ENCODE measurements at regions of chr5 and their contacts with region 1.

Region 1: GRCh38 chr5:176388444-176389134 is at the starts of genes HIGD2A and NOP16:
- DNase-seq: peak; percentile 92
- ATAC-seq: peak; percentile 90
- H3K4me3 Mint-ChIP-seq: peak within 1 kb of the TSS; percentile 100
- H3K27ac Mint-ChIP-seq: peak within 1 kb of the TSS; percentile 100
- H3K4me1 Mint-ChIP-seq: peaks cover 30% of the 10 kb centered on the region
- H3K27me3 Mint-ChIP-seq: no peaks in the 10 kb centered on the region
- CTCF ChIP-seq: no peak
- total RNA-seq, gene HIGD2A: 113 and 116 TPM in 2 replicates
- total RNA-seq, gene NOP16: 50.9 and 65.1 TPM in 2 replicates

Region 2: DNA sequence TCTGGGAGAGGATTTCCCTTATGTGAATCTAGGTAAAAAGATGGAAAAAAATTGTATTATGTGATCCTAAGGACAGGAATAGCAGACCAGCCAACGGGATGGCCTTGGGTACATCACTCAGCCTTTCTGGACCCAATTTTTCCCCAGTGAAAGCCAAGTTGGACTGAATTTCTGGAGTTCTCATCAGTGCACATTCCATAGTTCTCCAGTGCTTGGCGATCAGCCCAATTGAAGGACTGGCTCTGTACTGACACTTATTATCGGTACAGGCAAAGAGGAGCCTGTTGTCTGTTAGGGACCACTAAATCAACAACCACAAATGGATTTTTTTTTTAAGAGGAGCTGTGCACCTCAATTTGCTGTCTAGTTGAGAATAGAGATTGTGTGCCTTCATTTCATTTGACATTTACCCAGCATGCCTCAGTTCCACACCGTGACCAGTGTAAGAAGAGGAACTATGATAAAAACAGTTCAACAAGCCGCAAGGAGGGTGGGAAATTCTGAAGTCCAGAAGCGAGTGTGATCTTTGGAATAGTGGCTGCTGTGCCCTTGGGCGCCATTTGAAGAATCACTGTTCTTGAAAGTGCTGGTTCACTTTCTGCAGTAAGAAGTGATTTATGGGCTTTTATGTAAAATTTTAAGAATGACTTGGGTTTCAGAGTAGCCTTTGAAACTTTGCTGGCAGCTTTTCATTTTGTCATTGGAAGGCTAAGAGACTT is 15.3 kb before region 1 on chr5:
- CTCF ChIA-PET with region 1: no interaction called
- POLR2A ChIA-PET with region 1: interaction called, 3 read pairs
- intact Hi-C with region 1: loop called (anchors 1 kb)
- DNase-seq: no peak
- ATAC-seq: peak; percentile 91
- H3K4me3 Mint-ChIP-seq: no peak overlapping the region
- H3K27ac Mint-ChIP-seq: peak overlapping the region; percentile 21
- H3K4me1 Mint-ChIP-seq: peaks cover 9% of the 10 kb centered on the region
- H3K27me3 Mint-ChIP-seq: no peaks in the 10 kb centered on the region
- CTCF ChIP-seq: no peak

Region 3: GRCh38 chr5:176447982-176448608 is 59.5 kb after region 1 on chr5 and contains the start of gene FAF2:
- CTCF ChIA-PET with region 1: interaction called, 3 read pairs
- POLR2A ChIA-PET with region 1: interaction called, 10 read pairs
- intact Hi-C with region 1: loop called (anchors 1 kb)
- DNase-seq: peak; percentile 100
- ATAC-seq: peak; percentile 94
- H3K4me3 Mint-ChIP-seq: peak within 1 kb of the TSS; percentile 98
- H3K27ac Mint-ChIP-seq: peak within 1 kb of the TSS; percentile 96
- H3K4me1 Mint-ChIP-seq: peaks cover 32% of the 10 kb centered on the region
- H3K27me3 Mint-ChIP-seq: peaks cover 2% of the 10 kb centered on the region
- CTCF ChIP-seq: peak; percentile 49
- total RNA-seq, gene FAF2: 35.6 and 39.0 TPM in 2 replicates

Region 4: DNA sequence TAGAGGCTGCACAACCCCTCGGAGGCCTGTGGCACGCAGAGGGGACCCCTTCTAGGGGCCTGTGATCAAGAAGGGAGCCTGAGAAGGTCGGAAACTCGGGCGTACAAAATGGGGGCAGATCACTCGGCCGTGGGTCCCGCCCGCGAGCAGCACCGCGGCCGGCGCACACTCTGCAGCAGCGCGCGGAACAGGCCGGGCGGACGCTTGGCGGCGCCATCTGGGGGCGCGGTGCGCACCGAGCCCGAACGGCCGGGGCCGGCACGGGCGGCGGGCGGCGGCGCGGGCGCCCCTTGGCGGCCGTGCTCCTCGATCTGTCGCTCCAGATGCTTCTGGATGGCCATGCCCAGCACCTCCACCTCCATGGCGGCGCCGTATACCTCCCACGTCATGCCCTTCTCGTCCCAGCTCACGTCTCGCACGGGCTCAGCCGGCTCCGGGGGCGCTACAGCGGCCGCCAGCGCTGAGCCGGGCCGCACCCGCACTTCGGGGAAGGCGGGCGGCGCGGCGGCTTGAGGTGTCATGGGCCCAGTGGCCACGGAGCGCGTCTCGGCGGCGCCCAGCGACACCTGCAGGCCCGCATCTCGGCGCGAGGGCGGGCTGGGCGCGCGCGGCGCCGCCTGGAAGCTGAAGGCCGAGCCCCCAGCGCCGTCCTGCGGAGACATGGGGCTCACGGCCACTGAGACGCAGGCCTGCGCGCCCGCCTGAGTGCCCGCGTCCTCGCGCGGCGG is 208.3 kb after region 1 on chr5:
- CTCF ChIA-PET with region 1: no interaction called
- POLR2A ChIA-PET with region 1: no interaction called
- intact Hi-C with region 1: no loop called
- DNase-seq: peak; percentile 44
- ATAC-seq: peak; percentile 80
- H3K4me3 Mint-ChIP-seq: peak overlapping the region; percentile 72
- H3K27ac Mint-ChIP-seq: no peak overlapping the region
- H3K4me1 Mint-ChIP-seq: peaks cover 7% of the 10 kb centered on the region
- H3K27me3 Mint-ChIP-seq: peaks cover 10% of the 10 kb centered on the region
- CTCF ChIP-seq: no peak

Region 5: DNA sequence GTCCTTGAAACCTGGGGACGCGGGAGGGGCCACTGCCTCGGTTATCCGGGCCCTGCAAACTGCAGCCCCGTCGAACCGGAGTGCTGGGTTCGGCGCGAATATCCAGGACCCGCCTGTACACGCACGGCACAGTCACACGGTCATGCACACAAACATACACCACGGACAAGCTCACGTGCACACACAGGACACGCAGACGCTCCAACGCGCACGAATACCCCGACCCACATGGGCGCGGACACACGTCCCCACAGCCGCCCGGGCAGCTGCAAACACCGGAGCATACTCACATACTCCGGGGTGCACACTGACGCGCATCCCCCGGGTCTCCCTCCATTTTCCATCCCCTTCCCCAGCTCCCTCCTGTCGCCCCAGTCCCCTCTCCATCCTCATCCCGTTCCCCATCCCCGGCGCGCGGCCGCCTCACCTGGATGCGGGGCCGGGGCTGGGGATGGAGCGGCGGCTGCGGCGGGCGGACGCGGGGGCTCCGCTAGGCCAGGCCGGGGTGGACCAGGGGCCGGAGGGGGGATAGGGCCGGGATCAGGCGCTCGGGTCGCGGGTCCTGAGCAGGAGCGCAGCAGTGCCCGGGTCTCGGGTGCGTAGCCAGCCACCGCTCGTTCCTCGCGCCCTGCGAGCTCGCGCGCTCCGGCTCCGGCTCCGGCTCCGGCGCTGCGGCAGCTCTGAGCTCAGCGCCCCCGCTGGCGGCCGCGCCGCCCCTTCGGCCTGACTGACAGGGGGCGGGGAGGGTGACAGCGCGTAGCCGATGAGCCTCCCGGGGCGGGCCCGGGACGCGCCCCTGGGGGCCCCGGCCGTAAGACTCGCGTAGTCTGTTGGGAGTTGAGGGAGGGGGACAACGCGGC is 241.5 kb after region 1 on chr5 and contains the starts of genes EIF4E1B and SNCB:
- CTCF ChIA-PET with region 1: no interaction called
- POLR2A ChIA-PET with region 1: no interaction called
- intact Hi-C with region 1: no loop called
- DNase-seq: peak; percentile 69
- ATAC-seq: peak; percentile 97
- H3K4me3 Mint-ChIP-seq: peak within 1 kb of the TSS; percentile 77
- H3K27ac Mint-ChIP-seq: no peak within 1 kb of the TSS
- H3K4me1 Mint-ChIP-seq: peaks cover 51% of the 10 kb centered on the region
- H3K27me3 Mint-ChIP-seq: peaks cover 28% of the 10 kb centered on the region
- CTCF ChIP-seq: no peak
- total RNA-seq, gene EIF4E1B: not detected in 2 replicates
- total RNA-seq, gene SNCB: 0.17 TPM in 1 of 2 replicates, not detected in the other

Region 6: GRCh38 chr5:177133091-177133852 is 744.7 kb after region 1 on chr5 and contains the start of gene NSD1:
- CTCF ChIA-PET with region 1: no interaction called
- POLR2A ChIA-PET with region 1: no interaction called
- intact Hi-C with region 1: loop called (anchors 10 kb)
- DNase-seq: peak; percentile 92
- ATAC-seq: peak; percentile 74
- H3K4me3 Mint-ChIP-seq: peak within 1 kb of the TSS; percentile 85
- H3K27ac Mint-ChIP-seq: peak within 1 kb of the TSS; percentile 87
- H3K4me1 Mint-ChIP-seq: peaks cover 52% of the 10 kb centered on the region
- H3K27me3 Mint-ChIP-seq: no peaks in the 10 kb centered on the region
- CTCF ChIP-seq: no peak
- total RNA-seq, gene NSD1: 103 and 108 TPM in 2 replicates

Region 7: DNA sequence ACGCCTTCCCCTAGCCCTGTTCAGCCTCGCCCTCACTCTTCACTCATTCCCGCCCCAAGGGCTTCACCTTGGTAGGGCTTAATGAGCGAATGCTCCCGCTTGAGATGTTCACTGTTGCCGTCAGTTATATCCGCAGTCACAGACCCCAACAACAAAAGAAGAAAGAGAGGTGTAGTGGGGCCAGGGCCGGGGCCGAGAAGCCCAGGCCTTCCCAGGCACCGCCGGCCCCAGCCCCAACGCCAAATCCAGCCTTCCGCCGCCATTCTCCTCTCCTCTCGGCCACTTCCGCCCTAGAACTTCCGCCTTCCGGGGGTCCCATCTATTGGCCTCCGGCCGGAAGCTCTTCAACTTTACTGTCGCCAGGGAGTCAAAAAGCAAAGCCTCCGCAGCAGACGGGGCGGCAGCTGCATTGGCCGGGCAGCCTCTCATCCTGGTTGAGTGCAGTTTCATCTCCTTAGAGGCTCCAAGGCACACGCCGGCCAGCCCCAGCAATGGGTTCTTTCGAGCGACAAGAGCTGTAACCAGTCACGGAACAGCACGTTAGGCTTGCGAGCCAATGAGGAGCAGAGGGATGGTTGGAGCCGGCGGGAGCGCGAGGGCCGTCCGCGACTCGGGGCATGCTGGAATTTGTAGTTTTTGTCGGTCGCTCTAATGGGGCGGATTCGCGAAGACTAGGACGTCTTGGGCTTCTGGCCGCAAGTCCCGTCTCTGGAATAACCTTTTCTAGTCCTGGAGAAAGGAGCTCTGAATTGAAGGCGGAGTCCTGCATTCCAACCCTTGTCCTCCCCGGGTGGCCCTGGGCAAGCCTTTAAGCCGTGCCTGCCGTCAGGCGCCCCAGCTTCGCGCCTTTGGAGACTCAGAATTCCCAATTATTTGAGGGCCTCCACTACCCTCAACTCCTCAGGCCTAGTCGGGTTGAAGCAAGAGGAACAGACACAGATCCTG is 963.1 kb after region 1 on chr5 and contains the start of gene LMAN2:
- CTCF ChIA-PET with region 1: no interaction called
- POLR2A ChIA-PET with region 1: interaction called, 4 read pairs
- intact Hi-C with region 1: loop called (anchors 2 kb)
- DNase-seq: peak; percentile 83
- ATAC-seq: peak; percentile 98
- H3K4me3 Mint-ChIP-seq: peak within 1 kb of the TSS; percentile 98
- H3K27ac Mint-ChIP-seq: peak within 1 kb of the TSS; percentile 100
- H3K4me1 Mint-ChIP-seq: peaks cover 59% of the 10 kb centered on the region
- H3K27me3 Mint-ChIP-seq: no peaks in the 10 kb centered on the region
- CTCF ChIP-seq: no peak
- total RNA-seq, gene LMAN2: 88.0 and 89.7 TPM in 2 replicates

Measured in activated B cell treated with CpG ODN at 0.5 μM for 24 hours (primary cell).